IMR-90 (cell line): ENCODE measurements at regions of chr18 and their contacts with region 1.

Region 1: DNA sequence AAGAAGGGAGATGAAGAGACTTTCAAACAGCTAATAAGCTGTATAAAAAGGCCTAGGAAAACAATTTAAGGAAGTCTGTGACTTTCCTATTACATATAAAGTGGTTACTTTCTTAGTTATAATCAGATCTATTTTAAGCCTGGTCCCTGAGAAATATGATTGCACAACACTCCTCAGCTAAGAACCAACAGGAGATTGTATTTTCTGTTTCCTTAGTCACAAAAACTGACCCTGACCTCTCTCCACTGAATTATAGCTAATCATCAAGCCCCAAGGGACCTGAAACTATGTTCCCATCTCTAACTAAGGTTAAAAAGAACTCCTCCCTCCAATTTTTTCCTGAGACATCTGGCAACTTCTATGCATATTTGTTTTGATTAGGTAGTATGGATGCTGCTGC is 106.9 kb downstream of the ROCK1 start:
- DNase-seq: peak; percentile 86
- ATAC-seq: peak; percentile 82
- H3K4me3 ChIP-seq: no peak overlapping the region
- H3K27ac ChIP-seq: no peak overlapping the region
- H3K4me1 ChIP-seq: no peaks in the 10 kb centered on the region; the same call in 1 of the 2 replicates
- H3K27me3 ChIP-seq: no peaks in the 10 kb centered on the region
- CTCF ChIP-seq: no peak
- POLR2A ChIP-seq: no peak
- RAD21 ChIP-seq: no peak

Region 2: DNA sequence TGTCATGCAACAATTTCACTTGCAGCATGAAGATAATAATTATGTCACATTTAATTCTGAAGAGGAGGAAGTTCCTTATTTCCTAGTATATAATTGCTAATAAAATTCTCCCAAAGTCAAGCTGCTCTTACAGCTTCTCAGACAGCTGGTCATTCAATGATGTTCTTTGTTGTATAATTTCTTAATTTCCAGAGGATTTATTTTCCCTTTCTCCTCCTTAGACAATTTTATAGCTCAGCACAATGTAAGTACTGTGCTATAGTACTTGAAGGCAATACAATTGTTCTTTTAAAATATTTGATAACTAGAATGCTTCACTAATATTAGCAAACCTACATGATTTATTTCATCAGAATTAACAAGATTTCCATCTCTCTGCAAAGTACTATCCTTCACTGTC is 33.5 kb after region 1 on chr18:
- CTCF ChIA-PET with region 1: no interaction called
- POLR2A ChIA-PET with region 1: no interaction called
- dilution Hi-C with region 1: no loop called
- in situ Hi-C with region 1: no loop called
- intact Hi-C with region 1: loop called (anchors 5 kb)
- DNase-seq: no peak
- ATAC-seq: no peak
- H3K4me3 ChIP-seq: no peak overlapping the region
- H3K27ac ChIP-seq: no peak overlapping the region
- H3K4me1 ChIP-seq: no peaks in the 10 kb centered on the region
- H3K27me3 ChIP-seq: no peaks in the 10 kb centered on the region
- CTCF ChIP-seq: no peak
- POLR2A ChIP-seq: no peak
- RAD21 ChIP-seq: no peak

Region 3: GRCh38 chr18:22032392-22032961 is 1027.8 kb after region 1 on chr18:
- CTCF ChIA-PET with region 1: no interaction called
- POLR2A ChIA-PET with region 1: no interaction called
- dilution Hi-C with region 1: no loop called
- in situ Hi-C with region 1: no loop called
- intact Hi-C with region 1: no loop called
- DNase-seq: peak; percentile 92
- ATAC-seq: peak; percentile 64
- H3K4me3 ChIP-seq: no peak overlapping the region
- H3K27ac ChIP-seq: no peak overlapping the region
- H3K4me1 ChIP-seq: no peaks in the 10 kb centered on the region
- H3K27me3 ChIP-seq: peaks cover 3% of the 10 kb centered on the region
- CTCF ChIP-seq: no peak
- POLR2A ChIP-seq: no peak
- RAD21 ChIP-seq: no peak